ENCODE measurements at regions of chr14 and their contacts with region 1.

Region 1: GRCh38 chr14:101964297-101965144 is at the start of gene DYNC1H1:
- DNase-seq: peak; percentile 83 to 99
- H3K4me3 ChIP-seq: peak within 1 kb of the TSS; percentile 76
- H3K27ac ChIP-seq: peak within 1 kb of the TSS; percentile 75
- H3K4me1 ChIP-seq: peaks cover 59% of the 10 kb centered on the region
- H3K27me3 ChIP-seq: no peaks in the 10 kb centered on the region
- CTCF ChIP-seq: no peak; the same call in 1 of the 2 replicates
- total RNA-seq, gene DYNC1H1: 1,203 and 1,268 TPM in 2 replicates

Region 2: DNA sequence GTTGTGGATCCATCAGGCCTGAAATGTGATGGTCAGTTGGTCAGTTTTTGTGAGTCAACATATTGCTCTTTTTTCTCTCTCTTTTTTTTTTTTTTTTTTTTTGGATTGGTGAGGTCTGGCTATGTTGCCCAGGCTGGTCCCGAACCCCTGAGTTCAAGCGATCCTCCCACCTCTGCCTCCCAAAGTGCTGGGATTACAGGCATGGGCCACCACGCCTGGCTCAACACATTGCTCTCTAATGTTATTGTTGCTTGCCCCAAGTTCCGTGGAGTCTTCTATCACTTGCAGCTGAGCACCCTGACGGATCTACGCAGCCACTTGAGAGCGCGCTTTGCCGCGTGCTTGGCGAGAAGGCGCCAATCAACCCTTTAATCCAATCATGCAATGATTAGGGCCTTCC is 472.7 kb before region 1 on chr14:
- CTCF ChIA-PET with region 1: no interaction called
- POLR2A ChIA-PET with region 1: no interaction called
- intact Hi-C with region 1: no loop called
- DNase-seq: no peak
- H3K4me3 ChIP-seq: no peak overlapping the region
- H3K27ac ChIP-seq: no peak overlapping the region
- H3K4me1 ChIP-seq: no peaks in the 10 kb centered on the region
- H3K27me3 ChIP-seq: no peaks in the 10 kb centered on the region
- CTCF ChIP-seq: no peak

Region 3: DNA sequence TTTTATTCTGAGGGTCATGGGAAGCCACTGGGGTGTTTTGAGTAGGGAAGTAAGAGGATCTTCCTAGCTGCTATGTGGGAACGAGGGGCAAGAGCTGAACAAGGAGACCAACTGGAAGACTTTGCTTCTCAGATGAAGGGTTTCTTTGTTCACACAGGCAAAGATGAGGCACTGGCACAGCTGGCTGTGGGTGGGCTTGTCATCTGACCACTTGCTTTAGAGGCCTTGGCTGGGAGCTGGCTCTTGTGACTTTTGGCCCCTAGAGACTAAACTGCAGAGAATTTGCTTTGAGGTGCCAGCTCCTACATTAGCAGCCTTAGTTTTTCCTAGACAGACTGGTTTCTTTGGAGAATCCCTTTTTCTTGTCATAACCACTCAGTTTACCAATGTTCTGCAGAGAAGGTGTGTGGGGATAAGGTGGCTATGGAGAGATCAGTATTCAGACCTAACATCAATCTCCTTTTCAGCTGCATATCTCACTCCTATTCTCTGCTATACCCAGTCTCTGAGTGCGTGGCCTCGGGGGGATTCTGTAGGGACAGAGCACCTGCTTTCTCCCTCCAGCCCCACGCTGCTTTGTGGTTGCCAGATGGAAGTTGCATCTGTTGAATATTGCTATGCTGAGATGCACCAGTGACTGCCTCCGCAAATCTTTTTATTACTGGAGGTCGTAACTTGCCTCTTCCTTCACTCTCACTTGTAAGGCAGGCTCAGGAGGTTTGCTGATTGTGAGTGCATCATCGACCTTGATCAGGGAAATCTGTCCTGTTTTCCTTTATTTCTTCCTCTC is 190.3 kb before region 1 on chr14:
- CTCF ChIA-PET with region 1: interaction called, 14 read pairs
- POLR2A ChIA-PET with region 1: no interaction called
- intact Hi-C with region 1: loop called (anchors 2 kb)
- DNase-seq: no peak
- H3K4me3 ChIP-seq: no peak overlapping the region
- H3K27ac ChIP-seq: no peak overlapping the region
- H3K4me1 ChIP-seq: peaks cover 37% of the 10 kb centered on the region
- H3K27me3 ChIP-seq: no peaks in the 10 kb centered on the region
- CTCF ChIP-seq: no peak

Region 4: GRCh38 chr14:101980251-101981099 is 16.0 kb after region 1 on chr14:
- CTCF ChIA-PET with region 1: no interaction called
- POLR2A ChIA-PET with region 1: interaction called, 4 read pairs
- intact Hi-C with region 1: loop called (anchors 1 kb)
- DNase-seq: peak; percentile 95 to 100
- H3K4me3 ChIP-seq: peak overlapping the region; percentile 5; the same call in 1 of the 2 replicates
- H3K27ac ChIP-seq: peak overlapping the region; percentile 88
- H3K4me1 ChIP-seq: peaks cover 54% of the 10 kb centered on the region
- H3K27me3 ChIP-seq: no peaks in the 10 kb centered on the region
- CTCF ChIP-seq: no peak

Region 5: DNA sequence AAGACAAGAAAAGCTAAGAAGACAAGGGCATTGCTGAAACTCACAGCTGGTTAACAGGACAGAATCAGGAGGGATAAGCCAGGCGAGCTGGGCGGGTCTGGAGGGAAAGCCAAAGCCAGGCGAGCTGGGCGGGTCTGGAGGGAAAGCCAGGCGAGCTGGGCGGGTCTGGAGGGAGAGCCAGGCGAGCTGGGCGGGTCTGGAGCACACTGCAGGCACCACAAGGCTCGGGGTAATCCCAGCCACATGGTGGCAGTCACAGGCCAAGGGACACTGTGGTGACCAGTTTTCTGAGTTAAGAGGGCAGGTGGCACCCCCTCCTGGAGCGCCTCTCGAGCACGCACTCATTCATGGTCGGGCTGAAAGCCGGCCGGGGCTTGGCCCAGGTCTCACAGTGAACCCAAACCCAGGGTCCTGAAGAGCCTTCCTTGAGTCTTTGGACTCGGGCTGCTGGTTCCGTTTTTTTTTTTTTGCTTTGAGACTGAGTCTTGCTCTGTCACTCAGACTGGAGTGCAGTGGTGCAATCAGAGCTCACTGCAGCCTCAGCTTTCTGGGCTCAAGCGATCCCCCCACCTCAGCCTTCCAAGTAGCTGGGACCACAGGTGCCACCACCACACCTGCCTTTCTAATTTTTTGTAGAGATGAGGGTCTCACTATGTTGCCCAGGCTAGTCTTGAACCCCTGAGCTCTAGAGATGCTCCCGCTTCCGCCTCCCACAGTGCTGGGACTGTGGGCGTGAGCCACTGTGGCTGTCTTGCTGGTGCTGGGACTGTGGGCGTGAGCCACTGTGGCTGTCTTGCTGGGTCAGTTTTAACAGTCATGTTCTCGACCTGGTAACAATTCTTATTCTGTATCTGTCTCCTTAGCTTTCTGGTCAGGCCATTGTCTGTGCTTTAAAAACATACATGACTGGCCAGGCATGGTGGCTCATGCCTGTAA is 82.1 kb after region 1 on chr14:
- CTCF ChIA-PET with region 1: interaction called, 8 read pairs
- POLR2A ChIA-PET with region 1: interaction called, 3 read pairs
- intact Hi-C with region 1: loop called (anchors 1 kb)
- DNase-seq: peak; percentile 98 to 100
- H3K4me3 ChIP-seq: no peak overlapping the region
- H3K27ac ChIP-seq: no peak overlapping the region
- H3K4me1 ChIP-seq: peaks cover 3% of the 10 kb centered on the region
- H3K27me3 ChIP-seq: no peaks in the 10 kb centered on the region
- CTCF ChIP-seq: peak; percentile 84

Region 6: GRCh38 chr14:102220031-102220430 is 255.5 kb after region 1 on chr14:
- CTCF ChIA-PET with region 1: no interaction called
- POLR2A ChIA-PET with region 1: no interaction called
- intact Hi-C with region 1: loop called (anchors 5 kb)
- DNase-seq: no peak
- H3K4me3 ChIP-seq: no peak overlapping the region
- H3K27ac ChIP-seq: no peak overlapping the region
- H3K4me1 ChIP-seq: peaks cover 19% of the 10 kb centered on the region
- H3K27me3 ChIP-seq: no peaks in the 10 kb centered on the region
- CTCF ChIP-seq: no peak

Region 7: GRCh38 chr14:102316743-102317563 is 352.4 kb after region 1 on chr14:
- CTCF ChIA-PET with region 1: no interaction called
- POLR2A ChIA-PET with region 1: interaction called, 11 read pairs
- intact Hi-C with region 1: loop called (anchors 2 kb)
- DNase-seq: peak; percentile 85 to 91
- H3K4me3 ChIP-seq: peak overlapping the region; percentile 69
- H3K27ac ChIP-seq: peak overlapping the region; percentile 69
- H3K4me1 ChIP-seq: peaks cover 42% of the 10 kb centered on the region
- H3K27me3 ChIP-seq: no peaks in the 10 kb centered on the region
- CTCF ChIP-seq: peak; percentile 43

Measured in PC-9 (cell line).